Activated CD4-positive, alpha-beta memory T cell treated with anti-CD3 and anti-CD28 coated beads for 36 hours (primary cell): ENCODE measurements at regions of chr18 and their contacts with region 1.

Region 1: GRCh38 chr18:31658670-31659575 is 25.5 kb downstream of the B4GALT6 start:
- DNase-seq: peak; percentile 34
- H3K4me3 Mint-ChIP-seq: no peak overlapping the region
- H3K27ac Mint-ChIP-seq: peak overlapping the region; percentile 60
- H3K4me1 Mint-ChIP-seq: peaks cover 23% of the 10 kb centered on the region
- H3K27me3 Mint-ChIP-seq: peaks cover 2% of the 10 kb centered on the region

Region 2: DNA sequence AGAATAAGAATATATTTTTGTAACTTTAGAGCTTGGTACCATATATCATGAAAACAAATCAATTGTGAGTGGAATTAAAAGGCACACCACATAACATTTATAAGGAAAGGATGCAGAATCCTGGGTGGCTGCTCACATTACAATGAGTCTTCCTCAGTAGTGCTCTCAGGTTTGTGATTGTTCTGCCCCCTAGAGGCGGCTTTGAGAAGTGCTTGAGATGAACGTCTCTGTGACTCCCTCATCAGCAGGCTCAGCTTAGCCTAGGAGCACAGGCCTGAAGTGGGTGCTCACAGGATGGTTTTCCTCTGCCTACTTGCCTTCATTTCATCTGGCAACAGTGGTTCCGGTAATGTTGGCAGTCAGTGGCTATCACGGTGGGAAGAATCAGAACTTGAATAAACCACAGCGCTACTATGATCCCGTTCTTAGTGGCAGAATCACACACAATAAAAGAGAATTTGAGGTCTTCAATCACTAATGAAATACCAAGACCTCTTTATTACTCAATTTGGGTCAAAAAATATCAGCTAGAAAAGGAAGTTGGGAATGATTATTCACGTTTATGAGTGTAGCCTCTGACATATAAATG is 63.5 kb after region 1 on chr18:
- CTCF ChIA-PET with region 1: interaction called, 9 read pairs
- POLR2A ChIA-PET with region 1: no interaction called
- intact Hi-C with region 1: loop called (anchors 2 kb)
- DNase-seq: peak; percentile 87
- H3K4me3 Mint-ChIP-seq: no peak overlapping the region
- H3K27ac Mint-ChIP-seq: no peak overlapping the region
- H3K4me1 Mint-ChIP-seq: peaks cover 5% of the 10 kb centered on the region
- H3K27me3 Mint-ChIP-seq: peaks cover 20% of the 10 kb centered on the region

Region 3: GRCh38 chr18:32048507-32049091 is 389.7 kb after region 1 on chr18:
- CTCF ChIA-PET with region 1: no interaction called
- POLR2A ChIA-PET with region 1: no interaction called
- intact Hi-C with region 1: loop called (anchors 10 kb)
- DNase-seq: peak; percentile 45
- H3K4me3 Mint-ChIP-seq: no peak overlapping the region
- H3K27ac Mint-ChIP-seq: peak overlapping the region; percentile 91
- H3K4me1 Mint-ChIP-seq: peaks cover 39% of the 10 kb centered on the region
- H3K27me3 Mint-ChIP-seq: no peaks in the 10 kb centered on the region